ENCODE measurements at regions of chr2 and their contacts with region 1.

Region 1: GRCh38 chr2:201854221-201854801 is 48.0 kb downstream of the CDK15 start:
- DNase-seq: no peak
- ATAC-seq: no peak
- H3K4me3 ChIP-seq: no peak overlapping the region
- H3K27ac ChIP-seq: no peak overlapping the region
- H3K4me1 ChIP-seq: no peaks in the 10 kb centered on the region
- H3K27me3 ChIP-seq: peaks cover 0 to 3% of the 10 kb centered on the region in 2 experiments; a peak in 2 of 4 replicates
- CTCF ChIP-seq: no peak
- EP300 ChIP-seq: no peak
- POLR2A ChIP-seq: no peak
- RAD21 ChIP-seq: no peak

Region 2: GRCh38 chr2:201928363-201928762 is 74.1 kb after region 1 on chr2:
- CTCF ChIA-PET with region 1: no interaction called
- POLR2A ChIA-PET with region 1: interaction called, 10 read pairs
- RAD21 ChIA-PET with region 1: no interaction called
- SMC1A ChIA-PET with region 1: no interaction called
- in situ Hi-C with region 1: no loop called
- intact Hi-C with region 1: no loop called
- DNase-seq: no peak
- ATAC-seq: no peak
- H3K4me3 ChIP-seq: no peak overlapping the region
- H3K27ac ChIP-seq: no peak overlapping the region
- H3K4me1 ChIP-seq: no peaks in the 10 kb centered on the region
- H3K27me3 ChIP-seq: no peaks in the 10 kb centered on the region; a peak in 1 of 4 replicates
- CTCF ChIP-seq: no peak
- EP300 ChIP-seq: no peak
- POLR2A ChIP-seq: no peak
- RAD21 ChIP-seq: no peak